ENCODE measurements at regions of chr11 and their contacts with region 1.

Region 1: DNA sequence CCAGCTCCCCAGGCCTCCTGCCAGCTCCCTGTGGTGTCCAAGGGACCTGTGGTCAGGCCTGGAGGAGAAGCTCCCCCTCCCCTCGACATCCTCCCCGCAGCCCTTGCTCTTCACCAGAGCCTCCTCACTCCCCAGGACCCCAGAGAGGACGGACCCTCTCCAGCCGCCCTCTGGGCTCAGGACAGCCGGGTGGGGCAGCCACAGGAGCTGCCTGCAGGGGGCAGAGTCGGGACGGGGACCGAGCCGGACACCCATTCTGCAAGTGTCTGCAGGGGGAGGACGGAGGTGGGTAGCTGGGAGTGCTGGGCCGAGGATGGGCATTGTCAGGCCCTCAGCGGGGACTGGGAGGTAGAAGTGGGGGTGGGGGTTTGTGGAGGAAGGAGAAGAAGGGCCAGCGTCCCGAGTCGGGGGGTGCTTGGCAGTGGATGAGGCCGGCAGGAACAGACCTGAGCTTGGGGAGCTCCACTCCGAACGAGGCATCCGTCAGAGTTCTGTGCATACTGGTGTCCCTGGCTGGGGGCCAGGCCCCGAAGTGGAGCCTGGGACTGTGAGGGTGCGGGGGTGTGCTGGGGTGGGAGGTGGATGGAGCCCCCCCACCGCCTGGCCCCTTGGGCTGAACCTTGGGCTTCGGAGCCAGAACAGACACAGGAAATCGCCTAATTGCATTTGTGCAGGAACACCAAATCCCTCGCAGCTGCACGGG is 15.2 kb downstream of the PRR33 start:
- DNase-seq: no peak
- H3K4me3 ChIP-seq: no peak overlapping the region
- H3K27ac ChIP-seq: no peak overlapping the region
- H3K4me1 ChIP-seq: peaks cover 19% of the 10 kb centered on the region
- H3K27me3 ChIP-seq: no peaks in the 10 kb centered on the region
- CTCF ChIP-seq: peak; percentile 12 to 47

Region 2: GRCh38 chr11:1623716-1624115 is 252.8 kb before region 1 on chr11:
- CTCF ChIA-PET with region 1: no interaction called
- dilution Hi-C with region 1: loop called (anchors 5 kb)
- in situ Hi-C with region 1: no loop called
- intact Hi-C with region 1: no loop called
- DNase-seq: no peak
- H3K4me3 ChIP-seq: no peak overlapping the region
- H3K27ac ChIP-seq: no peak overlapping the region
- H3K4me1 ChIP-seq: no peaks in the 10 kb centered on the region
- H3K27me3 ChIP-seq: peaks cover 6% of the 10 kb centered on the region
- CTCF ChIP-seq: no peak

Measured in mammary epithelial cell (primary cell).